ENCODE measurements at regions of chr5 and their contacts with region 1.

Region 1: GRCh38 chr5:76460104-76460503 is 57.0 kb downstream of the IQGAP2 start:
- DNase-seq: no peak
- ATAC-seq: no peak
- H3K4me3 ChIP-seq: no peak overlapping the region
- H3K27ac ChIP-seq: no peak overlapping the region
- H3K4me1 ChIP-seq: no peaks in the 10 kb centered on the region
- H3K27me3 ChIP-seq: no peaks in the 10 kb centered on the region
- CTCF ChIP-seq: no peak
- POLR2A ChIP-seq: no peak
- RAD21 ChIP-seq: no peak

Region 2: GRCh38 chr5:76402886-76403765 is 57.0 kb before region 1 on chr5 and contains the start of gene IQGAP2:
- CTCF ChIA-PET with region 1: no interaction called
- POLR2A ChIA-PET with region 1: no interaction called
- dilution Hi-C with region 1: no loop called
- in situ Hi-C with region 1: no loop called
- intact Hi-C with region 1: no loop called
- DNase-seq: peak; percentile 34
- ATAC-seq: peak; percentile 85
- H3K4me3 ChIP-seq: peak within 1 kb of the TSS; percentile 51
- H3K27ac ChIP-seq: no peak within 1 kb of the TSS
- H3K4me1 ChIP-seq: no peaks in the 10 kb centered on the region
- H3K27me3 ChIP-seq: peaks cover 45% of the 10 kb centered on the region
- CTCF ChIP-seq: peak; percentile 53
- POLR2A ChIP-seq: no peak
- RAD21 ChIP-seq: peak; percentile 42
- total RNA-seq, gene IQGAP2: 0.28 and 0.36 TPM in 2 replicates

Region 3: GRCh38 chr5:76500633-76501393 is 40.7 kb after region 1 on chr5:
- CTCF ChIA-PET with region 1: no interaction called
- POLR2A ChIA-PET with region 1: no interaction called
- dilution Hi-C with region 1: no loop called
- in situ Hi-C with region 1: no loop called
- intact Hi-C with region 1: loop called (anchors 1 kb)
- DNase-seq: peak; percentile 43
- ATAC-seq: peak; percentile 56
- H3K4me3 ChIP-seq: no peak overlapping the region
- H3K27ac ChIP-seq: no peak overlapping the region
- H3K4me1 ChIP-seq: no peaks in the 10 kb centered on the region
- H3K27me3 ChIP-seq: peaks cover 3% of the 10 kb centered on the region
- CTCF ChIP-seq: no peak
- POLR2A ChIP-seq: no peak
- RAD21 ChIP-seq: no peak

Region 4: DNA sequence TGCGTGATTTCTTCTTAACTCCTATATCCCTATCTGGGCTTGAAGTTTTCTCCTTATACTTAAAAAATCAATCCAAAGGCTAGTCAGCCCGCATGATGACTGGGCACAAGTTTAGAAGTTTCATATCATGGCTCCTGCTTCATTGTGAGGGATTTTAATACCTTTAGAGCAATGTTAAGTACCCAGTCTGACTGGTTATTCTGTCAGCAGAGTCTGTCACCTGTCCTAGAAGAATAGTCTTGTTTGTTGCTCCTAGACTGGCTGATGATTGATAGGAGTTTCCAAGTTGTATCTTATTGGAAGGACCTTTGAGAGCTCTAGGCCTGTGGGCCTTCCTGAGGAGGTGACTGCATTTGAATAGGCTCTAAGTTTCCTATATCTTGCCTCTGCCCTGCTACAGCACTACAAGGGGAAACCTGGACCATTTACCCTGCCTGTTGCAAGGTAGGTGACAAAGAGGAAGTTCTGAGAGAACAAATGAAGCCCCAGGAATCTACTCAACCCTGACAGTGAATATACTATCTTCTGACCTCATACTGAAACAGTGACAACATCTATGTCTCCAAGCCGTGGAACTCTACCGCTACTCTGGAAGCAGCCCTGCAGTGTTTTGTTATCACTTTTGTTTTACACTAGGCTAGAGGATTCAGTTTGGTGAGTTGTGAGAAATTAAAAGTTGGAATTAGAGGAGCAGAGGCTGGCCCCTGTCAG is 96.6 kb after region 1 on chr5:
- CTCF ChIA-PET with region 1: no interaction called
- POLR2A ChIA-PET with region 1: no interaction called
- dilution Hi-C with region 1: no loop called
- in situ Hi-C with region 1: no loop called
- intact Hi-C with region 1: no loop called
- DNase-seq: no peak
- ATAC-seq: no peak
- H3K4me3 ChIP-seq: no peak overlapping the region
- H3K27ac ChIP-seq: no peak overlapping the region
- H3K4me1 ChIP-seq: no peaks in the 10 kb centered on the region
- H3K27me3 ChIP-seq: peaks cover 10% of the 10 kb centered on the region
- CTCF ChIP-seq: no peak
- POLR2A ChIP-seq: no peak
- RAD21 ChIP-seq: no peak